ENCODE measurements at regions of chr9 and their contacts with region 1.

Region 1: GRCh38 chr9:99140685-99141314 is 35.9 kb downstream of the TGFBR1 start:
- DNase-seq: peak; percentile 64
- ATAC-seq: peak; percentile 74
- H3K4me3 Mint-ChIP-seq: no peak overlapping the region
- H3K27ac Mint-ChIP-seq: no peak overlapping the region
- H3K4me1 Mint-ChIP-seq: peaks cover 31% of the 10 kb centered on the region
- H3K27me3 Mint-ChIP-seq: no peaks in the 10 kb centered on the region

Region 2: DNA sequence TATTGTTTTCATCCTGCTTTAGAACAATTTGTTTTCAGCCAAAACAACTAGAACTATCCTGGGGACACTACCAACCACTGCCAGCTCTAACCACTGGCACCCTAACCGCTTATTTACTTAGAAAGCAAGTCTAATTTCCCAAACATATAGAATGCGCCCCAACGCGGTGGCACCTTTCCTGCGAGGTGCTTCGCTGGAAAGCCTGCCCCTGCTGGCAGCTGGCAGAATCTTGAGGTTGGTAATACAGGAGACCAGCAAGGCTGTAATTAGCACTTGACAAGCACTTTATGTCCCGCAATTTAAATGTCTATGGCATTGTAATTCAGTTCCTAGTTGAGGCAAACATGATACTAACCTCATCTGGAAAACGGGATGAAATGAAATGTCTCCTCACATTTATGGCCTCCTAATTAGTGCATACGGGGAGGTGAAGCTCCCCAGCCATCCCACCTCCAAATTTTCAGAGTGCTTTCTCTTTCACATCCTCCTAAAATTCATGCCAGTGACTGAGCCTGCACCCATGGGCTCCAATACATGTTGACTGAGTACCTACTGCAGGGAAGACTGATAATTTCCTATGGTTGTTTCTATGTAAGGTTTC is 462.5 kb before region 1 on chr9:
- CTCF ChIA-PET with region 1: no interaction called
- POLR2A ChIA-PET with region 1: no interaction called
- intact Hi-C with region 1: no loop called
- DNase-seq: peak; percentile 48
- ATAC-seq: peak; percentile 30
- H3K4me3 Mint-ChIP-seq: no peak overlapping the region
- H3K27ac Mint-ChIP-seq: no peak overlapping the region
- H3K4me1 Mint-ChIP-seq: no peaks in the 10 kb centered on the region
- H3K27me3 Mint-ChIP-seq: peaks cover 17% of the 10 kb centered on the region

Region 3: DNA sequence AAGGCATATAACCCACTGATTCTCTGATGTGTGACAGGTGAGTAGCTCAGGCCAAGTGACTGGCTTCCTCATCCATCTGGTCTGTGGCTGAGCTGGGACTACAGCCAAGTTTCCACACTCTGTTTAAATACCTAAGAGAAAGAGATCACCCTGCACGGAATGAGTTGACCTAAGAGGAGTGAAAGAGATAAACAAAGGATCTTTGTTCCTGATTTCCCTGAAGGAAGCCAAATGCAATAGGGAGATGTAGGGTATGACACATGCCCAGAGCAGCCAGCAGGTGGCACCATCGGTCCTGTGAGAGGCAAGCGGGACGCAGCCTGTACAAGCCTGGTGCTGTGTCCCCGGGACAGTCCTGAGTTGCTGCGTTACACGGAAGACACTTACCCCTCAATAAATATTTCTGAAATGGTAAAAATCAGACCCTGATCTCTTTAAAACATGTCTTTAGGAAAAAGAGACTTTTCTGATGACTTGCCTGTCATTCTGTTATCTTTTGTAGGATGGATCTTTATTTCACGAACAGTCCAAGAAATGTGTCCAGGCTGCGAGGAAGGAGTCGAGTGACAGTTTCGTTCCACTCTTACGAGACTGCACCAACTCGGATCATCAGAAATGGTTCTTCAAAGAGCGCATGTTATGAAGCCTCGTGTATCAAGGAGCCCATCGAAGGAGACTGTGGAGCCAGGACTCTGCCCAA is 292.2 kb before region 1 on chr9:
- CTCF ChIA-PET with region 1: interaction called, 76 read pairs
- POLR2A ChIA-PET with region 1: no interaction called
- intact Hi-C with region 1: loop called (anchors 1 to 2 kb)
- DNase-seq: peak; percentile 91
- ATAC-seq: peak; percentile 96
- H3K4me3 Mint-ChIP-seq: no peak overlapping the region
- H3K27ac Mint-ChIP-seq: no peak overlapping the region
- H3K4me1 Mint-ChIP-seq: peaks cover 9% of the 10 kb centered on the region
- H3K27me3 Mint-ChIP-seq: no peaks in the 10 kb centered on the region

Region 4: DNA sequence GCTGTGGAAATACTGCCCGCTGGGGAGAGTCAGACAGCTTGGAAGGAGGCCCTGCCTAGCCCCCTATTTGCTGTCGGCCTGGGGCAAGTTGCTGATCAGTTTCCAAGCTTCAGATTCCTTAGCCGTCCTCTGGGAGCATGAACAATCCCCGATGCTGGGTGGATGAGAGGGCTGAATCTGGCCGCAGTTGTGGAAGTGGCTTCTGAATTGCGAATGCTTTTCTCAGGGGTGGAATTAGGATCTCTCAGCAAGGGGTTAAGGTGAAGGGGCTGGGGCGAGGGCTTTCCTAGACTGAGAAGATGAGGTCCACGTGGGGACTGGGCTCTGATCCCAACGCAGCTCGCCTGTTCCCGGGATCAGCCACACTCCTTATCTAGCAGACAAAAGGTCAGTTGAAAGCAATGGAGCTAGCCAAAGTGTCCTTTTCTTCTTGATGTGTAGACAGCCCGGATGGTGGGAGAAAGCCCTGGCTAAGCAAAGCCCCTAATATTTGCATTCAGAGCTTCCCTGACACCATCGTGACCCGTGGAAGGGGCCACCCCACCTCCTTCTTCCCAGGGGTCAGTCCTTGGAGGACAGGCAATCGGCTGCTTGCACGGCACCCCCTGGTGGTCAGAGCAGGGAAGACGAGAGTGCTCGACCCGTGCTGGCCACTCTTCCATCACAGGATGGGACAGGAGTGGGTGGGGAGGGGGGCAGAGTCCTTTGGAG is 142.2 kb before region 1 on chr9:
- CTCF ChIA-PET with region 1: interaction called, 122 read pairs
- POLR2A ChIA-PET with region 1: no interaction called
- intact Hi-C with region 1: loop called (anchors 1 kb)
- DNase-seq: peak; percentile 79
- ATAC-seq: peak; percentile 75
- H3K4me3 Mint-ChIP-seq: no peak overlapping the region
- H3K27ac Mint-ChIP-seq: no peak overlapping the region
- H3K4me1 Mint-ChIP-seq: peaks cover 19% of the 10 kb centered on the region
- H3K27me3 Mint-ChIP-seq: no peaks in the 10 kb centered on the region

Region 5: GRCh38 chr9:99104459-99105151 is 36.2 kb before region 1 on chr9 and contains the start of gene TGFBR1:
- CTCF ChIA-PET with region 1: interaction called, 24 read pairs
- POLR2A ChIA-PET with region 1: interaction called, 3 read pairs
- intact Hi-C with region 1: no loop called
- DNase-seq: peak; percentile 95
- ATAC-seq: peak; percentile 89
- H3K4me3 Mint-ChIP-seq: peak within 1 kb of the TSS; percentile 79
- H3K27ac Mint-ChIP-seq: peak within 1 kb of the TSS; percentile 83
- H3K4me1 Mint-ChIP-seq: peaks cover 49% of the 10 kb centered on the region
- H3K27me3 Mint-ChIP-seq: no peaks in the 10 kb centered on the region
- total RNA-seq, gene TGFBR1: 18.6 to 19.3 TPM

Region 6: DNA sequence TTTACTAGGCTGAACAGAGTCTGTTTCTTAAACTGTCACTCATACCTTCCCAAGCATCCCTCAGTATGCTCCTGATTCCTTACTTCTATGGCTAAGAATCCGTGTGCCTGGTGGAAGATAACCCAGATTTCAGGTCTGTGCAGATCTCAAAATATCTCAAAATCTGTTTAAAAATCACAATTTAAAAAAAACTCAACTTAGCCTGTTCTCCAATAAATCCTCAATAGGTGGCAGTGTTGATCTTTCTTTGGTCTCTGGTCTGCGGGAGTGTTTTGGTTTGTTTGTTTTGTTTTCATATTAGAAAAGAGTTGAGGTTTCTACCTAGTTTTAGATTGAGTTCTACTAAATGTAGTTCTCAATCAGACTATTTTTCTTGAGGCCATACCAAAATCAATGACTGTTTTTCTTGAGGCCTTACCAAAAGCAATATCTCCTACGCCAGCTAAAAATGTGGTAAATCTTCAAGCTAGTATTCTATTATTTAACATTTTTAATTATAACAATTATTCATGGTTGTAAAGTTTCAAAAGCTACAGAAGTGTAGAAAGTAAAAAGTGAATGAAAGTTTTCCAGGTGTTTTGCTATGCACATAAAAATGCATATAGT is 22.1 kb after region 1 on chr9:
- CTCF ChIA-PET with region 1: interaction called, 13 read pairs
- POLR2A ChIA-PET with region 1: interaction called, 5 read pairs
- intact Hi-C with region 1: no loop called
- DNase-seq: no peak
- ATAC-seq: peak; percentile 35
- H3K4me3 Mint-ChIP-seq: no peak overlapping the region
- H3K27ac Mint-ChIP-seq: no peak overlapping the region
- H3K4me1 Mint-ChIP-seq: peaks cover 22% of the 10 kb centered on the region
- H3K27me3 Mint-ChIP-seq: peaks cover 8% of the 10 kb centered on the region

Measured in activated CD4-positive, alpha-beta T cell treated with anti-CD3 and anti-CD28 coated beads for 36 hours (primary cell).